PC-3 (cell line): ENCODE measurements at regions of chr1 and their contacts with region 1.

Region 1: GRCh38 chr1:72623299-72623708 is 341.0 kb upstream of the NEGR1 start:
- DNase-seq: peak; percentile 78
- ATAC-seq: peak; percentile 79
- H3K4me3 ChIP-seq: peak overlapping the region; percentile 51; the same call in 1 of the 2 replicates
- H3K27ac ChIP-seq: no peak overlapping the region
- H3K4me1 ChIP-seq: peaks cover 13% of the 10 kb centered on the region; the same call in 1 of the 2 replicates
- H3K27me3 ChIP-seq: no peaks in the 10 kb centered on the region
- CTCF ChIP-seq: peak; percentile 84

Region 2: GRCh38 chr1:72724951-72725861 is 101.9 kb after region 1 on chr1:
- CTCF ChIA-PET with region 1: no interaction called
- POLR2A ChIA-PET with region 1: no interaction called
- intact Hi-C with region 1: no loop called
- DNase-seq: peak; percentile 24
- ATAC-seq: peak; percentile 33; the same call in 1 of the 2 replicates
- H3K4me3 ChIP-seq: no peak overlapping the region
- H3K27ac ChIP-seq: no peak overlapping the region
- H3K4me1 ChIP-seq: no peaks in the 10 kb centered on the region
- H3K27me3 ChIP-seq: no peaks in the 10 kb centered on the region
- CTCF ChIP-seq: peak; percentile 40; the same call in 1 of the 2 replicates

Region 3: GRCh38 chr1:72845342-72845741 is 222.0 kb after region 1 on chr1:
- CTCF ChIA-PET with region 1: no interaction called
- POLR2A ChIA-PET with region 1: no interaction called
- intact Hi-C with region 1: loop called (anchors 2 kb)
- DNase-seq: peak; percentile 60
- ATAC-seq: peak; percentile 85
- H3K4me3 ChIP-seq: no peak overlapping the region
- H3K27ac ChIP-seq: no peak overlapping the region
- H3K4me1 ChIP-seq: no peaks in the 10 kb centered on the region
- H3K27me3 ChIP-seq: no peaks in the 10 kb centered on the region
- CTCF ChIP-seq: peak; percentile 68

Region 4: DNA sequence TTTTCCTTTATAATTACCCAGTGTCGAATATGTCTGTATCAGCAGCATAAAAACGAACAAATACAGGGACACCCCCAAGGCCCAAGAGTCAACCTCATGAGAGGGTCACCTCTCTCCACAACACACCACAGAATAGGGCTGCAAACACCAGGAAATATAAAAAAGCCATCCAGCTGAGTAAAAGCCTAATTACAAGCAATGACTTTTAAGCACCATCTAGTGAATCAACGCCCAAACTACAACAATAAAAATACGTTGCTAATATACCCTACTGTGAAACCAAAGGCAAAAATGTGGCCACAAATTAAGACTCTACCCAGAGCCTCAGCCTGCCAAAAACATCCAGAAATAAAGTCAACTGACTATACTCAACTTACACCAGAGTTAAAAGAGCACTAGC is 476.9 kb after region 1 on chr1:
- CTCF ChIA-PET with region 1: no interaction called
- POLR2A ChIA-PET with region 1: no interaction called
- intact Hi-C with region 1: loop called (anchors 1 kb)
- DNase-seq: peak; percentile 42
- ATAC-seq: peak; percentile 80
- H3K4me3 ChIP-seq: no peak overlapping the region
- H3K27ac ChIP-seq: no peak overlapping the region
- H3K4me1 ChIP-seq: no peaks in the 10 kb centered on the region
- H3K27me3 ChIP-seq: no peaks in the 10 kb centered on the region; the same call in 1 of the 2 replicates
- CTCF ChIP-seq: peak; percentile 55; the same call in 1 of the 2 replicates